Left ventricle myocardium superior (tissue), 1 donor: ENCODE measurements at regions of chr12 and their contacts with region 1.

Region 1: DNA sequence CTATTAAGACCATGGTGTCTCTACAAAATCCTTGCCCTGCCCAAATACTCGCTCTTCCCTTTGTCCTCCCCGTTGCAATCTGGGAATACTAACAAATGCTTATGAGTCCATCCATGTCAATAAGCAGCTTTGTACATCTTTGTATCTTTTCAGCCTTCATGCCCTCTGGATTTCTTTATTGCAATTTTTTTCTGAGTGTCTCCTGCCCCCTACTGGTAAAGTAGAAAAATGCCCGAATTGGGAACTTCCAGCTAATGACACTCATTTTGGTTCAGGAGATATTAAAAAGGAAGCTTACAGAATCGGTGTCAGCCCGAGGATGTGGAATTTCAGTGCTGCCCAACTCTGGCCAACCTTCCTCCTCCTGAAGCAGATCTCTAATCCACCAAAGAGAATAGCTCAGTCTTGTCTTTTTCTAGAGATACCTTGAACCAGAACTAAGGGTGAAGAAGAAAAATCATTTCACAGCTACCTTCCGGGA is 46.0 kb downstream of the SH2B3 start:
- DNase-seq: no peak
- ATAC-seq: peak; percentile 2

Region 2: GRCh38 chr12:111405149-111405860 is 46.4 kb before region 1 on chr12:
- intact Hi-C with region 1: loop called (anchors 2 kb)
- DNase-seq: peak; percentile 96
- ATAC-seq: peak; percentile 83

Region 3: GRCh38 chr12:111653596-111653995 is 201.9 kb after region 1 on chr12:
- intact Hi-C with region 1: no loop called
- DNase-seq: no peak
- ATAC-seq: no peak